ENCODE measurements at regions of chr14 and their contacts with region 1.

Region 1: DNA sequence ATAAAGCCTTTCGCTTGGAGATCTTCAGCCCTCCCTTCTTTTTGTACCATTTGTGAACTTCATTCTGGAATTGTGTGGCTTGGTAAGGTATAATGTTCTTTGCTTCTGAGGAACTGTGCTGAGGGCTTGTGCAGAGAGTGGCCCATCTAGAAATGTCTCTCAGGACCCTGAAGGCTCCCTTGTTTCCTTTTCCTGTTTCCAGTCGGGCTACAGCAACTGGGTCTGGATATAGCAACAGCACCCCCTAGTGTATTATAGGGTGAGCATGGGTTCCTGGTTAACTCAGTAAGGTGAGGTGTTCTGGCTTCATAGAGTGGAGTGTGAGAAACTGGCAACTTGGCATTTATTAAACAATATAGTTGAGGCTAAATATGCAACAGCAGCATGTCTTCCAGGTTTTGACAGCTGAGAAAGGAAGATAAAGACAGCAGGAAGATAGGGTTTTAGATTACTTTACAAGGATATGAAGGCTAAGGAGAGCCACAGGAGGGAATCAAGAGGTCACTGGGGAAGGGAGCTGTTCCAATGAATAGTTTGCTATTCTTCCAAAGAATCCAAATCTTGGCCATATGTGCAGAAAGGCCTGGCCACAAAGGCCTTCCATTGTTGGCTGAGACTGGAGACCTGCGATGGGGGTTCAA is 49.1 kb upstream of the RNU6-8 start:
- DNase-seq: peak; percentile 36
- ATAC-seq: peak; percentile 93
- H3K4me3 ChIP-seq: no peak overlapping the region
- H3K27ac ChIP-seq: no peak overlapping the region
- H3K4me1 ChIP-seq: no peaks in the 10 kb centered on the region
- H3K27me3 ChIP-seq: no peaks in the 10 kb centered on the region
- CTCF ChIP-seq: peak; percentile 74 to 88 (median 86)
- EP300 ChIP-seq: no peak
- POLR2A ChIP-seq: no peak
- RAD21 ChIP-seq: peak; percentile 97

Region 2: DNA sequence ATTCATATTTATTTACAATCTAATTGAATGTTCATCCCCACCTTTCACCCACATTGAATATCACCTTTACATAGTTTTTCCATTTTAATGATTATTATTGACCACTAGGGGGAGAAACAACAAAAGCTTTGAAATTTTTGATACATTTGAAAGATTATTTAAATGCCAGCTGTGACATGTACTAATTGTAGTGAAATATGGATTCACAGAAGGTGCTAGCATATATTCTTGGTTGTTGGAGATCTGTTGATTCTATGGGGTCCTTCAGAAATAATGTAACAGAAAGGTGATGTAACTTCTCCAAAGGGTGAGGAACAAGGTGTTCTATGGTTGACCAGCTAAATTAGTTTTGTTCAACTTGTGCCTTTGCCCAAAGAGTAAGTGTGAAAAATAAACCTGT is 741.9 kb before region 1 on chr14:
- CTCF ChIA-PET with region 1: interaction called, 84 read pairs
- POLR2A ChIA-PET with region 1: no interaction called
- RAD21 ChIA-PET with region 1: interaction called, 23 read pairs
- SMC1A ChIA-PET with region 1: interaction called, 11 read pairs
- in situ Hi-C with region 1: loop called (anchors 5 kb)
- intact Hi-C with region 1: loop called (anchors 2 kb)
- DNase-seq: no peak
- ATAC-seq: peak; percentile 41; the same call in 2 of the 3 replicates
- H3K4me3 ChIP-seq: no peak overlapping the region
- H3K27ac ChIP-seq: no peak overlapping the region
- H3K4me1 ChIP-seq: no peaks in the 10 kb centered on the region
- H3K27me3 ChIP-seq: no peaks in the 10 kb centered on the region
- CTCF ChIP-seq: peak; percentile 26 to 50 (median 42); a peak in 4 of 6 replicates
- EP300 ChIP-seq: no peak
- POLR2A ChIP-seq: no peak
- RAD21 ChIP-seq: peak; percentile 54

Region 3: DNA sequence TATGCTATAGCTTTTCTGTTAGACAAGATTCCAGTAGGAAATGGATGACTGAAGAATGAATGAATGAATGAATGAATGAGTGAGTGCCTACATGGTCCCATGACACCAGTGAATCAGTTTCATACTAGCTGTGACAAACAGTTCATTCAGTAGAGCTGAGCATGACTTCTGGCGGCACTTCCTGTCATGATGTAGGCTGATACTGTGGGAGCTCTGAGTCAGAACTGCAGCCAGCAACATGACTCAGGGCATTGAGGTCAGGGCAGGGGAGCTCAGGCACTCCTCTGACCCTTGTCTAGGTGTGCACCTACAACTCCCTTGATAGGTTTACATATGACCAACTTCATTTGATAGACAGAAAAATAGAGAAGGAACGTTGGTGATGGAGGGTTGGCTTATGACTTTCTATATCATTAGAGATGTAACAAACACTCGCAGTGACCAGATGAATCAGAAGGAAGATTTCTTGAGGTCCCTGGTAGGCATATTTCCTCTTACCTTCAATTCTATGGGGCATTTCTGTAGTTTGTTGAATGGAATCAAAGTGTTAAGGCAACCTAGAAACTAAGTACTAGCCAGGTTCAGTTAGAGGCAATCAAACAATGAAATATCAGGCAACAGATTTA is 314.3 kb before region 1 on chr14:
- CTCF ChIA-PET with region 1: interaction called, 35 read pairs
- POLR2A ChIA-PET with region 1: no interaction called
- RAD21 ChIA-PET with region 1: interaction called, 10 read pairs
- SMC1A ChIA-PET with region 1: interaction called, 8 read pairs
- in situ Hi-C with region 1: loop called (anchors 5 kb)
- intact Hi-C with region 1: no loop called
- DNase-seq: peak; percentile 55
- ATAC-seq: peak; percentile 100
- H3K4me3 ChIP-seq: no peak overlapping the region
- H3K27ac ChIP-seq: no peak overlapping the region
- H3K4me1 ChIP-seq: no peaks in the 10 kb centered on the region
- H3K27me3 ChIP-seq: no peaks in the 10 kb centered on the region
- CTCF ChIP-seq: no peak
- EP300 ChIP-seq: peak; percentile 58 to 81; a peak in 2 of 4 replicates
- POLR2A ChIP-seq: no peak
- RAD21 ChIP-seq: no peak

Region 4: GRCh38 chr14:32167907-32168306 is 84.2 kb before region 1 on chr14:
- CTCF ChIA-PET with region 1: no interaction called
- POLR2A ChIA-PET with region 1: no interaction called
- RAD21 ChIA-PET with region 1: no interaction called
- SMC1A ChIA-PET with region 1: no interaction called
- in situ Hi-C with region 1: no loop called
- intact Hi-C with region 1: no loop called
- DNase-seq: no peak
- ATAC-seq: no peak
- H3K4me3 ChIP-seq: no peak overlapping the region
- H3K27ac ChIP-seq: no peak overlapping the region
- H3K4me1 ChIP-seq: no peaks in the 10 kb centered on the region; the same call in 1 of the 2 replicates
- H3K27me3 ChIP-seq: no peaks in the 10 kb centered on the region
- CTCF ChIP-seq: no peak
- EP300 ChIP-seq: no peak
- POLR2A ChIP-seq: no peak
- RAD21 ChIP-seq: no peak

Region 5: GRCh38 chr14:32202998-32203882 is 48.9 kb before region 1 on chr14 and contains the start of gene RNU6-8:
- CTCF ChIA-PET with region 1: interaction called, 15 read pairs
- POLR2A ChIA-PET with region 1: no interaction called
- RAD21 ChIA-PET with region 1: interaction called, 5 read pairs
- SMC1A ChIA-PET with region 1: interaction called, 10 read pairs
- in situ Hi-C with region 1: no loop called
- intact Hi-C with region 1: loop called (anchors 2 kb)
- DNase-seq: peak; percentile 57
- ATAC-seq: peak; percentile 76
- H3K4me3 ChIP-seq: peak within 1 kb of the TSS; percentile 73
- H3K27ac ChIP-seq: peak within 1 kb of the TSS; percentile 79
- H3K4me1 ChIP-seq: peaks cover 33% of the 10 kb centered on the region
- H3K27me3 ChIP-seq: no peaks in the 10 kb centered on the region
- CTCF ChIP-seq: no peak
- EP300 ChIP-seq: peak; percentile 6 to 38; a peak in 2 of 4 replicates
- POLR2A ChIP-seq: peak; percentile 54; the same call in 1 of the 2 replicates
- RAD21 ChIP-seq: no peak
- polyA plus RNA-seq, gene RNU6-8: not detected

Region 6: DNA sequence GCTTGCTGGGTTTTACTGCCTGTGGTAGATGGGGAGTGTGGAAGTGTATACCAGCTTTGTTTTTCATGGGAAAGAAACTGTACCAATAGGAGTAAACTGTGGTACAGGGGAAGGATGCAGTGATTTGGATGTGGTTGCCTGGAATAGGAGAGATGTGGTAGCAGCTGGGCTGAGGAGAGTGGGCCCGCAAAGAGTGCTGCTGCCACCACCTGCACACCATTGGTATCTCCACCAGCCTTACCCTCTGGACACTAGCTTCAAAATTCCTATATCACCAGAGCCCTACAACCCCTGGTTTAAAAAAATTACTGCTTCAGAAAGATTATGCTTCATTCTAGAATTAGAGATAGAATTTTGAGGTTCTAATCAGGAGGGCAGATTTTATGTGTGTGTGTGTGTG is 130.6 kb after region 1 on chr14:
- CTCF ChIA-PET with region 1: interaction called, 18 read pairs
- POLR2A ChIA-PET with region 1: no interaction called
- RAD21 ChIA-PET with region 1: interaction called, 6 read pairs
- SMC1A ChIA-PET with region 1: interaction called, 5 read pairs
- in situ Hi-C with region 1: no loop called
- intact Hi-C with region 1: no loop called
- DNase-seq: no peak
- ATAC-seq: peak; percentile 70
- H3K4me3 ChIP-seq: no peak overlapping the region
- H3K27ac ChIP-seq: no peak overlapping the region
- H3K4me1 ChIP-seq: no peaks in the 10 kb centered on the region
- H3K27me3 ChIP-seq: no peaks in the 10 kb centered on the region
- CTCF ChIP-seq: peak; percentile 11 to 35 (median 13); a peak in 2 of 6 replicates
- EP300 ChIP-seq: no peak
- POLR2A ChIP-seq: no peak
- RAD21 ChIP-seq: 0 out of 2 replicates have a peak, but pooled peaks have one; percentile 20

Region 7: DNA sequence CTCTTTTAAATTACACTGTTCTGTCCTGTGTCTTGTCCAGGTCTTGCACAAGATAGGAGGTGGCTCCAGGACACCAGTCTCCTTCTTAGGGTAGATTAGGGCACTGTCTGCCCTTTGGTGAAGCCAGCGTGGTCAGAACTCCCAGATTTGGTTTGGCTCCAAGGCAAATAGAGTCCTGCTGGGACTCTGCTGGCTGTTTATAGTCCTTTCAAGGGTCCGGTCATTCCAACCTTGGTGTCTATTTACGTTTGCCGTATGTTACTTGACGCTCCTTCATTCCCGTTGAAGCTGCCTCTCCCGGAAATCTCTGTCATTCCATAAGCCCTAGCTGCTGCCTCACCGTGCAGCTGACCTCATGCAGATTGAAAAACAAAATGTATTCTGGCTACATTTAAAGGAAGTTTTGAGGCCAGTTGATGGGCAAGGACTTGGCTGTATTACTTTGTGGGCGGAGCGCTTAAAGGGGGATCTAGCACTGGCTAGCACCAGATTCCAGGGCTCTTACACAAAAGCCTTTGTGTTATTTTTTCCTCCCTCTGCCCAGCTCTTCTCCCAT is 257.6 kb after region 1 on chr14:
- CTCF ChIA-PET with region 1: interaction called, 4 read pairs
- POLR2A ChIA-PET with region 1: no interaction called
- RAD21 ChIA-PET with region 1: interaction called, 12 read pairs
- SMC1A ChIA-PET with region 1: interaction called, 5 read pairs
- in situ Hi-C with region 1: no loop called
- intact Hi-C with region 1: no loop called
- DNase-seq: no peak
- ATAC-seq: no peak
- H3K4me3 ChIP-seq: no peak overlapping the region
- H3K27ac ChIP-seq: no peak overlapping the region
- H3K4me1 ChIP-seq: no peaks in the 10 kb centered on the region
- H3K27me3 ChIP-seq: no peaks in the 10 kb centered on the region
- CTCF ChIP-seq: no peak
- EP300 ChIP-seq: no peak
- POLR2A ChIP-seq: no peak
- RAD21 ChIP-seq: no peak

Measured in GM12878 (cell line).